Right ventricle myocardium inferior (tissue), 1 donor: ENCODE measurements at regions of chr9 and their contacts with region 1.

Region 1: DNA sequence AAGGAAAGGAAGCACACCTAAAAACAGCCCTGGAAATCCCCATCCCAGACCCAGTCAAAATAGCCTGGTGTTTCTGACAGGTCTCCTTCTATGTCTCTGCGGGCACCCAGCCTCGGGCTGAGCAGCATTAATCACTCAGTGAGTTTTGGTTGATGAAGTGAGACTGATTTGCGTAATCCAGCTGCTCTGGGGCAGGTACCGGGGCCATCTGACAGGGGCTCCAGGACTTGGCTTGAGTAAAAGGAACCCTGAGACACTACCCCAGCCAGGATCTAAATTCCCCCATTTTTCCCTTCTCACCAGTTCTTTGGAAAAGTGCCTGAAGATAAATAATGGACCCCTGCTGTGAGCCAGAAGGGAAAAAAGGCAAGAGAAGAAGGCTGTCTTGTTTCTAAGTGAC is 596 bp downstream of the SLC28A3 start:
- DNase-seq: no peak
- ATAC-seq: peak; percentile 79

Region 2: DNA sequence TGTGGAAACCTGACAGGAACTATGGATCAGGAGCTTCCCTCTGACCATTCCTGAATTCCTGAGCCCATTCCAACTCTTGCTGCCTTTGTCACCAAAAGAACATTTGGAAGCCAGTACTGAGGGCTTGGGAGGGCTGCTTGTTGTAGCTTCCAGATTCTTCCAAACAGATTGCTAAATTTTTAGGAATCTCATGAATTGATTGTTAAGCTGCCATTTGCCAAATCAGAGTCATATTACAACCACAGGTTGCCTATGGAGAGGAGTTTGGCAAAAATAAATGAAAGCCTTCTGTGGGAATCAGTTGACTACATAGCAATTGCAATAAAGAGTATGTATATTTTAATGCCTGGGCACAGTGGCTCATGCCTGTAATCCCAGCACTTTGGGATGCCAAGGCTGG is 39.8 kb after region 1 on chr9:
- intact Hi-C with region 1: loop called (anchors 2 kb)
- DNase-seq: no peak
- ATAC-seq: no peak

Region 3: DNA sequence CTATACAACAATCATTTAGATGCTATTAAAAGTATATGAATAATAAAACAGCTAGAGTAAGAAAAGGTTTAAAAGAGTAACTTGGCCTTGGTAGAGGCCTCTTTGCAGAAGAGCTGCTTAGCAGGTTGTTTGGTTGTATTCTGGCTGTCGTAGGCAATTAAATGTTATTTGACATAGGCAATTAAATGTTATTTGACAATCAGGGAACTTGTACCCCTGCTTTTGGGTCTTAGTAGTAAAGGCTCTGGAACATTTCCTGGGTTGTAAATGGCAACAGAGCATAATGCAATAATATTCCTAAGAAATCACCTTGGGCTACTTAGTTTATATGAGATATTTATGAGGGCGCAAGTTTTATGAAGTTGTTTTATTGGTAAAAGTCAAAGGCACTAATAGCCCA is 85.0 kb after region 1 on chr9:
- intact Hi-C with region 1: no loop called
- DNase-seq: no peak
- ATAC-seq: no peak